ENCODE measurements at regions of chr3 and their contacts with region 1.

Region 1: DNA sequence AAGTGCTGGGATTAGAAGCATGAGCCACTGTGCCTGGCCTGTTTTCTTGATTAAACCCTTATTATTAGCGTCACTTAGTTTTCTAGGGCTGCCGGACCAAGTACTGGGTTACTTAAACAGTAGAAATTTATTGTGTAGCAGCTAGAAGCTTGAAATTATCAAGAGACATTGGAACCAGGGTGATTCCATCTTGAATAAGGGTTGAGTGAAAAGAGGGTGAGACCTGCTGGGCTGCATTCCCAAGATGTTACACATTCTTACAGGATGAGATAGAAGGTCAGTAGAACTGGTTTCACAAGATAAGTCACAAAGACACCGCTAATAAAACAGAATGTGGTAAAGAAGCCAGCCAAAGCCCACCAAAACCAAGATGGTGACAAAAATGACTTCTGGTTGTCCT is 18.7 kb upstream of the FSTL1 start:
- DNase-seq: peak; percentile 80 to 95
- H3K4me3 ChIP-seq: peak overlapping the region; percentile 36; the same call in 1 of the 2 replicates
- H3K27ac ChIP-seq: peak overlapping the region; percentile 99
- H3K4me1 ChIP-seq: peaks cover 50% of the 10 kb centered on the region
- H3K27me3 ChIP-seq: no peaks in the 10 kb centered on the region
- CTCF ChIP-seq: no peak

Region 2: GRCh38 chr3:120129718-120130513 is 339.5 kb before region 1 on chr3:
- CTCF ChIA-PET with region 1: no interaction called
- POLR2A ChIA-PET with region 1: no interaction called
- intact Hi-C with region 1: no loop called
- DNase-seq: no peak
- H3K4me3 ChIP-seq: no peak overlapping the region
- H3K27ac ChIP-seq: no peak overlapping the region
- H3K4me1 ChIP-seq: no peaks in the 10 kb centered on the region
- H3K27me3 ChIP-seq: no peaks in the 10 kb centered on the region
- CTCF ChIP-seq: no peak

Region 3: DNA sequence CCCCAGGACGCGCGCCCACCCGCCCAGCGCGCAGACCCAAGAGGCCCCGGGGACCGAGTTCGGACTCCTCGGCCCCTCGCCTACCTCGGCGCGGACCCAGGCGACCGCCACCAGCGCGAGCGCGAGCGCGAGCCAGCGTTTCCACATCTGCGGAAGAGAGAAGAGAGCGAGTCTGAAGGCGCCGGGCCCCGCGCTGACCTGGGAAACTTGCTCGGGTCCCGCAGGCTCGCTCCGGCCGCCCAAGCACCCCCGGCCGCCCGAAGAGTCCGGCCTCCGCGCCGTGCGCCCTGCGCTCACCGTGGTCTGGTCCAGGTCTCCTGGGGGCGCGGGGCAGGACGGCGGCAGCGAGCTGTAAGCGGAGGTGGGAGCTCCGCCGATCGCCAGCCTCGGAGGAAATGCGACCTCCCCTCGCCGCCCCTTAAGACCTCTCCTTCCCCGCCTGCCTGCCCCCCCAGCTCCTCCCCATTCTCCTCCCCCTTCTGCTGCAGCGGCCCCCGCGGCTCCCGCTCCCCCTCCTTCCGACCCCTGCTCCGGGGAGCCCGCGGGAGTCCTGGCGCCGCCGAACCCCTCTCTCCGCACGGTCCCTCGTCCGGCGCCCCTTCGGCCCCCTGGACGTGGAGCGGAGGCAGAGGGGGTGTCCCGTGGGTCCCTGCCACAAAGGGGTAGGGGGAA is 18.7 kb before region 1 on chr3 and contains the start of gene FSTL1:
- CTCF ChIA-PET with region 1: no interaction called
- POLR2A ChIA-PET with region 1: interaction called, 5 read pairs
- intact Hi-C with region 1: loop called (anchors 2 kb)
- DNase-seq: peak in 1 of 2 experiments; percentile 46
- H3K4me3 ChIP-seq: peak within 1 kb of the TSS; percentile 74
- H3K27ac ChIP-seq: peak within 1 kb of the TSS; percentile 53
- H3K4me1 ChIP-seq: peaks cover 20% of the 10 kb centered on the region
- H3K27me3 ChIP-seq: no peaks in the 10 kb centered on the region
- CTCF ChIP-seq: no peak
- total RNA-seq, gene FSTL1: 225 and 256 TPM in 2 replicates

Region 4: DNA sequence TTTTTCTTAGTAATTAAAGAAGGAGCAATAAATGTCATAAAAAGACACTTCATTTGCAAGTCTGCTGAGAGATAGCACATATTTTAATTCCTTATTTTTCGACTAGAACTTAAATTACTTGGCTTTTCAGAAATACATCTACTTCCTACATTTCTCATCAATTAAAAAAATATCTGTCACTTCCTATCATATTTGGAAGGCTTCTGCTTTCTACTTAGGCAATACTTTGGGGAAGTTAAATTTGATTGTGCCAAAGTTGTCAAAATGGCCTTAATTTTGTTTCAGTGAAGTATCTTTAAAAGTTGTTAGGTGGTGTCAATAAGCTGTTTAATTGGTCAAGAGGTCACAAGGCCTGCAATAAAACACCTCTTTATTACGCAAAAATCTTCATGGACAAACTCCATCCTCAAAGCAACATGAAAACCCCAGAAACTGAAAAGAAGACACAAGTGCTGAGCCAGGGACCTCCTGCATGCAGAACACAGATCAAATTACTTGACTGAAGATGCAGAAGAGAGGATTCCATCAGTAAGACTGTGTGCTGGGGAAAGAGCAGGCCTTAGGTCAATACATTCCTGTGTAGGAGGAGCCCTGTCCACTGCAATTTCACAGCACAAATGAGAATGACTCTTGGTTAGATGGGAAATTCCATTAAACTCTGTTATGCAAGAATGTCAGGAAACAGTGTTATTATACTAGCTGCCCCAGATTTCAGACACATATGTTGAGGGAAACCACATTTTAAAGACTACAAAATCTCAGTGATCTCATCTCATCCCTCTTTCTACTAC is 29.3 kb after region 1 on chr3:
- CTCF ChIA-PET with region 1: no interaction called
- POLR2A ChIA-PET with region 1: interaction called, 3 read pairs
- intact Hi-C with region 1: loop called (anchors 1 kb)
- DNase-seq: peak; percentile 46 to 82
- H3K4me3 ChIP-seq: no peak overlapping the region
- H3K27ac ChIP-seq: peak overlapping the region; percentile 20
- H3K4me1 ChIP-seq: peaks cover 22% of the 10 kb centered on the region
- H3K27me3 ChIP-seq: no peaks in the 10 kb centered on the region
- CTCF ChIP-seq: no peak

Region 5: GRCh38 chr3:120506828-120507774 is 37.7 kb after region 1 on chr3:
- CTCF ChIA-PET with region 1: no interaction called
- POLR2A ChIA-PET with region 1: no interaction called
- intact Hi-C with region 1: loop called (anchors 2 kb)
- DNase-seq: peak; percentile 30 to 47
- H3K4me3 ChIP-seq: no peak overlapping the region
- H3K27ac ChIP-seq: no peak overlapping the region
- H3K4me1 ChIP-seq: peaks cover 9% of the 10 kb centered on the region
- H3K27me3 ChIP-seq: no peaks in the 10 kb centered on the region
- CTCF ChIP-seq: peak; percentile 76

Region 6: DNA sequence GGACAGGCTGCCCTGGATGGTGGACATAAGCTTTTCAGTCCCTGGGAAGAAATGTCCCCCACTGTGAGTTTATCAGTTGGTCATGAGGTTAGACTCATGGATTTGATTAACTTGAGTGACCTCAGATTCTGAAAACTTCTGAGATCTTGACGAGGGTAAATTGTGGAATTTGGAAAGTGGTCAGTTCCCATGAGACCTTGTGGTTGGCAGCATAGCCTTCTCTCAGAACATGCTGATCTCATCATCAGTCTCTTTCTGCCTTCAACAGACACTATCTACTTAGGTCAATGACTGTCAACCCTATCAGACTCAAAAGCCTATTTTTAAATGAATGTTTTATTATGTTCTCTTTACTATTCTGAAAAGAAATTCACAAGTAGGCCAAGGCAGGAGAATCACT is 81.1 kb after region 1 on chr3:
- CTCF ChIA-PET with region 1: no interaction called
- POLR2A ChIA-PET with region 1: no interaction called
- intact Hi-C with region 1: no loop called
- DNase-seq: no peak
- H3K4me3 ChIP-seq: no peak overlapping the region
- H3K27ac ChIP-seq: no peak overlapping the region
- H3K4me1 ChIP-seq: no peaks in the 10 kb centered on the region
- H3K27me3 ChIP-seq: no peaks in the 10 kb centered on the region
- CTCF ChIP-seq: no peak

Measured in PC-9 (cell line).